B cell (primary cell): ENCODE measurements at regions of chr15 and their contacts with region 1.

Region 1: DNA sequence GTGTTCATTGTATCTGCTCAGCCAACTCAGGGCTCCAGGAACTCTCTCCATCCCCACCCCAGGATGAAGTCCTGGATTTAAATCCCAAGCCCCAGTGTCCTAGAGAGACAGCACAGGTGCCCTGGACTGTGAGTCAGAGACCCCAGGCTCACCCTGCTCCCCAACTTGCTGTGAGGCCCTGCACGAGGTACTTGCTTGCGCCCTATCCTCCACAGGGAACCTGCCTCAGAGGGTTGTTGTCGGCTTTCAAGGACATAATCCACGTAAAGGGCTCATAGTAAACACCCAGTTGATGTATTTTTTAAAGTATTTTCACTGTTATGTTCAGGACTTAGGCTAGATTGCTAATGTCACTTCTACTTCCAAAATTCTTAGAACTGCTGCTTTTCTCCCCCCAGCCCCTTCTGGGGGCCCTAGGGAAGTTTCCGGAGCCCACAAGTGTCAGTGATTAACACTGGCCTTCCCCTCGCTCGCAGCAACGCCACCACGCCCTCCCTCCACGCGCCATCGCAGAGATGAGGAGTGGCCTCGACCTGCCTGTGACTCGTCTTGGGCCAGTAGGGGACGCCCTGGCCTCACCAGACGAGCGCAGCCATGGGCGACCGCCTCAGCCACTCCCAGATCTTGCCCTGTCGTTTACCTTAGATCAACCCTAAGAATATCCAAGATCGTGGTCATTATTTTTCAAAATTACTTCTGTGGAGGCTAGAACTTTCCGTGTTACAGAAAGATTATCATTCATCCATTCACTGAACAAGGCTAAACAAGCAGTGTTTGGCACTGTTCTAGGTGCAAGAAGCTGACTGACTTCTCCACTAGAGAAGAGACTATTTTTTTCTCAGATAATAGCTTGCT is 6.0 kb upstream of the SRP14 start:
- DNase-seq: peak; percentile 90
- ATAC-seq: peak; percentile 94
- H3K4me3 ChIP-seq: peak overlapping the region in 2 of 5 experiments; percentile 26 to 34
- H3K4me3 Mint-ChIP-seq: peak overlapping the region; percentile 52
- H3K27ac ChIP-seq: peak overlapping the region; percentile 65 to 69
- H3K27ac Mint-ChIP-seq: peak overlapping the region; percentile 86
- H3K4me1 ChIP-seq: peaks cover 57 to 64% of the 10 kb centered on the region in 2 donors
- H3K4me1 Mint-ChIP-seq: peaks cover 62% of the 10 kb centered on the region
- H3K27me3 ChIP-seq: no peaks in the 10 kb centered on the region
- H3K27me3 Mint-ChIP-seq: no peaks in the 10 kb centered on the region
- CTCF ChIP-seq: peak; percentile 97

Region 2: DNA sequence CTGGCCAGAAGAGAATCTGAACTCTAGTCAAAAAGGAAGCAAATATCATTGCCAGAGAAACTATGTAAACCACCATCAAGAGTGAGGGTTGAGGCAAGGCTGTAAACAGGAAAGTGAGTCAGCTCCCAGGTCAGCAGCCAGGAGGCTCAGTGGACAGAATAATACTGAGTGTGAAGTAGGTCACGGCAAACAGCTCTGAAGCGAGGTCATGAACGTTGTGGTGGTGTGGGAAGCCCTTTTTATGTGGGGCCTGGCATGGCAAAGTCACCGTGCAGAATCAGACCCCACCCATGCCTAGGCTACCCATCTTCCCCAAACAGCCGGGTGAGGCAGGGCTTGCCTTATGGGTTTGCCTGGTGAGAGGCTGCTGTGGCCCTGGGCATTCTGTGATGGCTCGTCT is 420.1 kb before region 1 on chr15:
- CTCF ChIA-PET with region 1: no interaction called
- POLR2A ChIA-PET with region 1: no interaction called
- intact Hi-C with region 1: no loop called
- DNase-seq: no peak
- ATAC-seq: peak; percentile 17
- H3K4me3 ChIP-seq: no peak overlapping the region
- H3K4me3 Mint-ChIP-seq: no peak overlapping the region
- H3K27ac ChIP-seq: no peak overlapping the region
- H3K27ac Mint-ChIP-seq: peak overlapping the region; percentile 21
- H3K4me1 ChIP-seq: peaks cover 0 to 5% of the 10 kb centered on the region in 2 donors
- H3K4me1 Mint-ChIP-seq: peaks cover 8% of the 10 kb centered on the region
- H3K27me3 ChIP-seq: no peaks in the 10 kb centered on the region
- H3K27me3 Mint-ChIP-seq: peaks cover 7% of the 10 kb centered on the region
- CTCF ChIP-seq: no peak

Region 3: DNA sequence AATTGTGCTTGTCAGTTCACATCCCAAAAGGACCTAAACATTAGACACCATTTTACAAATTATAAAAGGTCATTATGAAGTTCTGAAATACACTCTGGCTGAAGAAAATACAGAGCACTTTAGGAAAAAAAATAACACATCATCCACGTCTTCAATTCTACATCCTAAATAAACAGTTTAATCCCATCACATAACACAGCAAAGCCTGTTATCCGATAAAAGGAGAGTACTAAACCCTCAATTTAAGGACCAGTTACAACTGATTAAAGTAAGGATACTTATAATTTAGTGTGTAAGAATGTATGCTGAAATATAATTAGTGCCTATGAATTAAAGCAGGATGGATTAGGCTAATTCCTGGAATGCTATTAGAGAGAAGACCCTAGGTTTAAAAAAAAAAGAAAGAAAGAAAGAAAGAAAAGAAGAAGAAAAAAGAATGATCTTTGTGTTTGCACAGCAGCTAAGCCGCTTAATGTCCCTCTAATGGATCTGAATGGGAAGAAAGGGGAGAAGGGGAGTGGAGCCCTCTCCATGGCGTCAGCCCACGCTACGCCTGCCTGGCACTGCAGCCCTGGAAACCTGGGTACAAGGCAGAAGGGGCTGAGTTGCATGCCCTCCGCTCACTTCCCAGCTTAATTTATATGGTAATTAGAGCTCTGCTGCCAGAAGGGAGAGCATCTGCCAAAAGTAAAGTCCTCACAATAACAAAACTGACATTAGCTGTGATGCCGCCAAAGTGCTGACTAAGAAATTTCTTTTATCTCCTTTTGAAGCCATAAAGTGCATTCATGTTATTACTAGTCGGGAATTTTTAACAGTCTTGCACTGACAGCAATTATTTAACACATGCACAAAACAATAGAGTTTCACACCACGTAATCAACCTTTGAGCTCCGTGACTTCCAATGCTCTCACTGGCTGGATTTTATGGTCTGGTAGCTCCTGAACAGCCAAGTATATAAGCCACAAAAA is 352.3 kb before region 1 on chr15:
- CTCF ChIA-PET with region 1: no interaction called
- POLR2A ChIA-PET with region 1: no interaction called
- intact Hi-C with region 1: no loop called
- DNase-seq: no peak
- ATAC-seq: no peak
- H3K4me3 ChIP-seq: no peak overlapping the region
- H3K4me3 Mint-ChIP-seq: no peak overlapping the region
- H3K27ac ChIP-seq: no peak overlapping the region
- H3K27ac Mint-ChIP-seq: no peak overlapping the region
- H3K4me1 ChIP-seq: no peaks in the 10 kb centered on the region
- H3K4me1 Mint-ChIP-seq: no peaks in the 10 kb centered on the region
- H3K27me3 ChIP-seq: no peaks in the 10 kb centered on the region
- H3K27me3 Mint-ChIP-seq: peaks cover 21% of the 10 kb centered on the region
- CTCF ChIP-seq: no peak

Region 4: GRCh38 chr15:40064221-40064894 is 19.4 kb after region 1 on chr15:
- CTCF ChIA-PET with region 1: interaction called, 22 read pairs
- POLR2A ChIA-PET with region 1: interaction called, 17 read pairs
- intact Hi-C with region 1: no loop called
- DNase-seq: peak; percentile 65
- ATAC-seq: peak; percentile 42
- H3K4me3 ChIP-seq: no peak overlapping the region
- H3K4me3 Mint-ChIP-seq: peak overlapping the region; percentile 62
- H3K27ac ChIP-seq: peak overlapping the region; percentile 58 to 80
- H3K27ac Mint-ChIP-seq: peak overlapping the region; percentile 93
- H3K4me1 ChIP-seq: peaks cover 32 to 36% of the 10 kb centered on the region in 2 donors
- H3K4me1 Mint-ChIP-seq: peaks cover 24% of the 10 kb centered on the region
- H3K27me3 ChIP-seq: no peaks in the 10 kb centered on the region
- H3K27me3 Mint-ChIP-seq: no peaks in the 10 kb centered on the region
- CTCF ChIP-seq: no peak

Region 5: DNA sequence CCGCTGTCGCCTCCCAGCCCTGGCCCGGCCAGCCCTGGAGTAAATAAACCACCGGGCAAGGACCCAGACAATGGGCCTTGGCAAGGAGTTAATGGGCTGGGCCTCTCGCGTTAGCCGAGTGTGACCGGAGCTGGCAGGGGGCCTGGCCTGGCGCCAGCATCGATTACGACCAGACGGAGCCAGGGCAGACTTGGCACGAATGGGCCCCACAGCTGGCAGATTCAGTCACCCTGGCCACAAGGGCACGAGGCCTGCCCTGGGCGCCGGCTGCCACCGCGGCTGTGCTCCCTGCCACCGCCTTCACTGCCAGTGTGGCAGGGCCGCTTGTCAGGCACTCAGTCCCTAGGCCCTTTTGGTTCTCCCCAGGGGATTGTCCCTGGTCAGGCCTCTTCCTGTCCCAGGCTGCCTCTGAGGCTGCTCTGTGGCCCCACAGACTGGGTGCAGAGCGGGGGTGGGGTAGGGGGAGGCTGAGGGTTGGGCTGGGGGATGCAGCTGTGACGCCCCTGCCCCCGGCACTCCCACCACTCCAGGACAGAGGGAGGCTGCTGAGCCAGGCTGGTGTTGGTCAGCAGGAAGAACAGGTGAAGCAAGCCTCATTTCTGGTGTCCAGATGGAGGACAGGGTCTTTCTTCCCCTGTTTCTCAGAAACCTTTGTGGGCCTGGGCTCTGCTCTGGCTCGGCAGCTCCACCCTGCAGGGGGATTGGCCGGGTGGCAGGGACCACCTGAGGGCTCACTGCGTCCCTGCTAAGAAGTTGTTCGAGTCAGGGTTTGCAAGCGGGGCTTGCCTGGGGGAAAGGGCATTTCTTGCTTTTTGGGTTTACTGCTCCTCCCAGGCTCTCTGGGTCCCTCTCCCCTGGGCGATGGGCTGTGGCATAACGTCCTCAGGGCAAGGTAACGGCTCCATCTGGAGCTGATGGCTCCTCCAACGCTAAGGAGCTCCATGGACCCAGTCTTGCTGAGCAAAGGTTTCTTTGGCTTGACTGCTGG is 24.5 kb after region 1 on chr15:
- CTCF ChIA-PET with region 1: interaction called, 22 read pairs
- POLR2A ChIA-PET with region 1: interaction called, 17 read pairs
- intact Hi-C with region 1: no loop called
- DNase-seq: peak; percentile 75
- ATAC-seq: peak; percentile 78
- H3K4me3 ChIP-seq: no peak overlapping the region
- H3K4me3 Mint-ChIP-seq: peak overlapping the region; percentile 39
- H3K27ac ChIP-seq: peak overlapping the region; percentile 54 to 78
- H3K27ac Mint-ChIP-seq: peak overlapping the region; percentile 90
- H3K4me1 ChIP-seq: peaks cover 34 to 38% of the 10 kb centered on the region in 2 donors
- H3K4me1 Mint-ChIP-seq: peaks cover 41% of the 10 kb centered on the region
- H3K27me3 ChIP-seq: no peaks in the 10 kb centered on the region
- H3K27me3 Mint-ChIP-seq: no peaks in the 10 kb centered on the region
- CTCF ChIP-seq: no peak

Region 6: GRCh38 chr15:40081691-40082194 is 36.8 kb after region 1 on chr15:
- CTCF ChIA-PET with region 1: interaction called, 934 read pairs
- POLR2A ChIA-PET with region 1: interaction called, 9 read pairs
- intact Hi-C with region 1: loop called (anchors 2 kb)
- DNase-seq: no peak
- ATAC-seq: no peak
- H3K4me3 ChIP-seq: peak overlapping the region; percentile 1 to 66 (median 14)
- H3K4me3 Mint-ChIP-seq: peak overlapping the region; percentile 74
- H3K27ac ChIP-seq: peak overlapping the region; percentile 81 to 82
- H3K27ac Mint-ChIP-seq: peak overlapping the region; percentile 96
- H3K4me1 ChIP-seq: peaks cover 37 to 49% of the 10 kb centered on the region in 2 donors
- H3K4me1 Mint-ChIP-seq: peaks cover 58% of the 10 kb centered on the region
- H3K27me3 ChIP-seq: no peaks in the 10 kb centered on the region
- H3K27me3 Mint-ChIP-seq: no peaks in the 10 kb centered on the region
- CTCF ChIP-seq: no peak

Region 7: DNA sequence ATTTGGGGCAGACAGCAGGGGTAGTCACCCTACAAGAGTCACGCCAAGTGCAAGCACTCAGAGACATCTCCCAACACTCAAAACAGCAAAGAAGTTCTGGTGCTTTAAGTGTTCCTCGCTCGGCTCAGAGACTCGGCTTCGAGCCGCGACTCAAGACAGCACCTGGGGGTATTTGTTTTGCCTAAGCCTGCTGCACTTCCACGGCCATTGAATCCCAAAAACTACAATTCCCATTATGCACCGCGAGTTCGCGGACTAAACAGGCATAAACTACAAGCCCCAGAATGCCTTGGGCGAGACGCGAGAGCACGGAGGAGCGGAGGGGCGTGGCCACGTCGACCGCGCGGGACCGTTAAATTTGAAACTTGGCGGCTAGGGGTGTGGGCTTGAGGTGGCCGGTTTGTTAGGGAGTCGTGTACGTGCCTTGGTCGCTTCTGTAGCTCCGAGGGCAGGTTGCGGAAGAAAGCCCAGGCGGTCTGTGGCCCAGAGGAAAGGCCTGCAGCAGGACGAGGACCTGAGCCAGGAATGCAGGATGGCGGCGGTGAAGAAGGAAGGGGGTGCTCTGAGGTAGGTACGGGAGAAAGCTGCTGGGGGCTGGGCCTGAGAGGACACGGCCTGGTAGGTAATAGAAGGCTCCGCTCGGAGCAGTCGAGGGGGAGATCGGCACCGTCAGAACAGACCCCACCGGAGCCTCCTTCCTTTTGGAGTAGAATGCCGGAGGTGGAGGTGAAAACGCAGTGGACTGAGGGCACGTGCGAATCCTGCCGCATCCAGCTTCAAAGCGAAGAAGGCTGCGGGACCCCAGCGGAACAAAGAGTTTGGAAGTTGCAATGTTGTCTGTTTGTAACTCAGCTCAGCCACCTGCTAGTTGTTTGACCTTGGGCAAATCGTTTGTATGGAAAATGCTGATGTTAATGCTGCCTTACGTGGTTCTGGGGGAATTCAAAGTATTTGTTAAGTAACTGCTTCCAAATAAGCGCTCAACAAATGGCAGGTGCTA is 116.0 kb after region 1 on chr15 and contains the start of gene BUB1B:
- CTCF ChIA-PET with region 1: interaction called, 7 read pairs
- POLR2A ChIA-PET with region 1: no interaction called
- intact Hi-C with region 1: loop called (anchors 1 kb)
- DNase-seq: peak; percentile 96
- ATAC-seq: peak; percentile 97
- H3K4me3 ChIP-seq: peak within 1 kb of the TSS; percentile 56 to 77 (median 71)
- H3K4me3 Mint-ChIP-seq: no peak within 1 kb of the TSS
- H3K27ac ChIP-seq: no peak within 1 kb of the TSS
- H3K27ac Mint-ChIP-seq: no peak within 1 kb of the TSS
- H3K4me1 ChIP-seq: peaks cover 10 to 14% of the 10 kb centered on the region in 2 donors
- H3K4me1 Mint-ChIP-seq: peaks cover 7% of the 10 kb centered on the region
- H3K27me3 ChIP-seq: no peaks in the 10 kb centered on the region
- H3K27me3 Mint-ChIP-seq: no peaks in the 10 kb centered on the region
- CTCF ChIP-seq: no peak
- total RNA-seq, gene BUB1B: 2.9 and 4.4 TPM in 2 replicates